PC-3 (cell line): ENCODE measurements at regions of chr7 and their contacts with region 1.

Region 1: DNA sequence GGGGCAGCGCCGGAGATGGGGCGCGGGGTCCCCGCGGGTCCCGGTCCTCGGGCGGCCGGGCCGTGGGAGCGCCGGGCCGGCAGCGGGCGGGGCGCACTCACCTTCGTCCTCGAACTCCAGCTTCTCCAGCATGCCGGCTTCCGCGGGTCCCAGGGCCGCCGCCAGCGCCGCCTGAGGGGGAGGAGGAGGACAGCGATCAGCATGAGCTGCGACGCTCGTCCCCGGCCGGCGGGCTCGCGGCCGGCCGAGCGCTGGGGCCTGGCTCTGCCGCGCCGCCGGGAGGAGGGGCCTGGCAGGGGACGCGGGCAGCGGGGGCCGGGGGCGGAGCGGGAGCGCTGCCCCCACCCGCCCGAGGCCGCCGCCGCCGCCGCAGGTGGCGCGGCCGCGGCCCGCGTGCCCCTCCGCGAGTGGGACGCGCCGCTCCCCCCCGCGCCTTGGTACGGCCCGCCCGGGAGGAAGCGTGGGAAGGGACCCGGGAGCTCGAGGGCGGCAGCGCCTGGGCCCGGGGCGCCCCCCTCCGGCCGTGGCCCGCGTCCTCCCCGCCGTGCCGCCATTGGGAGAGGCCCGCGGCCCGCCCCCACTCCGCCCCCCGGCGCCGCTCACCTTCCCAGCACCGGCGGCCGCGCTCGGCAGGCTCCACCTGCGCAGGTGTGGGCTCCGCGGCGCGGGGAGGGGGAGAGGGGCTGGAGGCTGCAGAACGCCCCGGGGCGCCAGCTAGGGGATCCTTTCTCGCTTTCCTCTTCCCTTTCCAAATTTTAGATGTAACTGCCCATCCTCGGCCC is 112.5 kb upstream of the RHEB start:
- DNase-seq: peak; percentile 85
- ATAC-seq: peak; percentile 82
- H3K4me3 ChIP-seq: peak overlapping the region; percentile 96
- H3K27ac ChIP-seq: peak overlapping the region; percentile 62
- H3K4me1 ChIP-seq: peaks cover 24% of the 10 kb centered on the region
- H3K27me3 ChIP-seq: no peaks in the 10 kb centered on the region
- CTCF ChIP-seq: 0 out of 2 replicates have a peak, but pooled peaks have one; percentile 15

Region 2: GRCh38 chr7:151599401-151600227 is 32.5 kb before region 1 on chr7:
- CTCF ChIA-PET with region 1: no interaction called
- POLR2A ChIA-PET with region 1: interaction called, 11 read pairs
- intact Hi-C with region 1: loop called (anchors 2 kb)
- DNase-seq: peak; percentile 87
- ATAC-seq: peak; percentile 63
- H3K4me3 ChIP-seq: no peak overlapping the region
- H3K27ac ChIP-seq: peak overlapping the region; percentile 72
- H3K4me1 ChIP-seq: peaks cover 43% of the 10 kb centered on the region
- H3K27me3 ChIP-seq: no peaks in the 10 kb centered on the region
- CTCF ChIP-seq: no peak

Region 3: DNA sequence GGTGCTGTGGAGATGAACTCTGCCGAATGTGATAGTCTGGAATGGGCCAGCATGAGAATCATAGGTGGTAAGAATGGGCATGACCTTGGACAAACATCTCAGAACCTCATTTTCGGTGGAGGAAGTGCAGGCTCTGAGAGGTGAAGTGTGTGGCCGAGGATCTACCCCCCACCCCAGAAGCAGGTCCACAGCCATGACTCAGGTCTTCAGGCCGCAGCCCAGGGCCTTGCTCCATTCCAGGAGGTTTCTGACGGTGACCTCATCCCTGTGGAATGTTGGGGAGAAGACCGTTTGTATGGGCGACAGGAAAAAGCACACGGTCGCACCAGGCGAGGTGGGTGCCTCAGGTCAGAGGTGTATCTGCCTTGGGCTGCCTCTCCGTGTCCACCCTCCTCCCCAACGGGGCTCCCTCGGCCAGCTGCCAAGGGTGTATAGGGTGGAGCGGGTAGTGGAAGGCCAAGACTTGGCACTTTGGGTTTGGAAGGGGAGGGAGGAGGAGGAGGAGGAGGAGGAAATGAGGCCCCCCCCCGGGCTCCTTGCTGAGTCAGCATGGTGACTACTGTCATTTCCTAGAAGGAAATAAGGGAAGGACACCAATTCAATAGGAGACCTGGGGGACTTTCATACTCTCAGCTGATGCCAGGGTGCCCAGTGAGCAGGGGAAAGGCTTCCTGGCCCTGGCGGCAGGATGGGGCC is 55.5 kb after region 1 on chr7:
- CTCF ChIA-PET with region 1: no interaction called
- POLR2A ChIA-PET with region 1: interaction called, 13 read pairs
- intact Hi-C with region 1: no loop called
- DNase-seq: peak; percentile 99
- ATAC-seq: peak; percentile 95
- H3K4me3 ChIP-seq: no peak overlapping the region
- H3K27ac ChIP-seq: peak overlapping the region; percentile 85
- H3K4me1 ChIP-seq: peaks cover 28% of the 10 kb centered on the region
- H3K27me3 ChIP-seq: no peaks in the 10 kb centered on the region
- CTCF ChIP-seq: no peak

Region 4: GRCh38 chr7:151744656-151745638 is 112.8 kb after region 1 on chr7:
- CTCF ChIA-PET with region 1: interaction called, 3 read pairs
- POLR2A ChIA-PET with region 1: no interaction called
- intact Hi-C with region 1: loop called (anchors 2 kb)
- DNase-seq: peak; percentile 88
- ATAC-seq: peak; percentile 83
- H3K4me3 ChIP-seq: no peak overlapping the region
- H3K27ac ChIP-seq: peak overlapping the region; percentile 65
- H3K4me1 ChIP-seq: peaks cover 30% of the 10 kb centered on the region
- H3K27me3 ChIP-seq: no peaks in the 10 kb centered on the region
- CTCF ChIP-seq: peak; percentile 61

Region 5: GRCh38 chr7:152723364-152723763 is 1091.2 kb after region 1 on chr7:
- CTCF ChIA-PET with region 1: no interaction called
- POLR2A ChIA-PET with region 1: no interaction called
- intact Hi-C with region 1: no loop called
- DNase-seq: no peak
- ATAC-seq: no peak
- H3K4me3 ChIP-seq: no peak overlapping the region
- H3K27ac ChIP-seq: no peak overlapping the region
- H3K4me1 ChIP-seq: no peaks in the 10 kb centered on the region
- H3K27me3 ChIP-seq: no peaks in the 10 kb centered on the region
- CTCF ChIP-seq: no peak